ENCODE measurements at regions of chr19 and their contacts with region 1.

Region 1: GRCh38 chr19:662962-663681 is at the start of gene RNF126:
- DNase-seq: peak; percentile 97
- H3K4me3 Mint-ChIP-seq: peak within 1 kb of the TSS; percentile 93
- H3K27ac Mint-ChIP-seq: peak within 1 kb of the TSS; percentile 95
- H3K4me1 Mint-ChIP-seq: peaks cover 40% of the 10 kb centered on the region
- H3K27me3 Mint-ChIP-seq: no peaks in the 10 kb centered on the region
- total RNA-seq, gene RNF126: 84.4 to 89.7 TPM

Region 2: DNA sequence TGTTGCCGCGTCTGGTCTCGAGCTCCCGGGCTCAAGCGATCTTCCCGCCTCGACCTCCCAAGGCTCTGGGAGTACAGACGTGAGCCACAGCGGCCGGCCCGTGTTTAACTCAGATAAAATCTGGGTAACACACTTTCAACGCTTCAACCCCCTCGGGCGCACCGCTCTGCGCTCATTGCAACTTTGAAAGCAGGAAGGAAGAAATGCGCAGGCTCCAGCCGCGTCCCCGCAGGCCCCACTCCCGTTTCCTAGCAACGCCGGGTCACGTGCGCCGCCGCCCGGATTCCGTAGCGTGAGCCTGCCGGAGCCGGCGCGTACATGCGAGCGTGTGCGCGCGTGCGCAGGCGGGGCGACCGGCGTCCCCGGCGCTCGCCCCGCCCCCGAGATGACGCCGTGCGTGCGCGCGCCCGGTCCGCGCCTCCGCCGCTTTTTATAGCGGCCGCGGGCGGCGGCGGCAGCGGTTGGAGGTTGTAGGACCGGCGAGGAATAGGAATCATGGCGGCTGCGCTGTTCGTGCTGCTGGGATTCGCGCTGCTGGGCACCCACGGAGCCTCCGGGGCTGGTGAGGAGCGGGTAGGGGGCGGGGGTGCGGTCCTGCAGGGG is 90.9 kb before region 1 on chr19 and contains the start of gene BSG:
- CTCF ChIA-PET with region 1: no interaction called
- POLR2A ChIA-PET with region 1: no interaction called
- intact Hi-C with region 1: loop called (anchors 2 kb)
- DNase-seq: peak; percentile 99
- H3K4me3 Mint-ChIP-seq: peak within 1 kb of the TSS; percentile 92
- H3K27ac Mint-ChIP-seq: peak within 1 kb of the TSS; percentile 93
- H3K4me1 Mint-ChIP-seq: peaks cover 35% of the 10 kb centered on the region
- H3K27me3 Mint-ChIP-seq: no peaks in the 10 kb centered on the region
- total RNA-seq, gene BSG: 185 to 205 TPM

Region 3: DNA sequence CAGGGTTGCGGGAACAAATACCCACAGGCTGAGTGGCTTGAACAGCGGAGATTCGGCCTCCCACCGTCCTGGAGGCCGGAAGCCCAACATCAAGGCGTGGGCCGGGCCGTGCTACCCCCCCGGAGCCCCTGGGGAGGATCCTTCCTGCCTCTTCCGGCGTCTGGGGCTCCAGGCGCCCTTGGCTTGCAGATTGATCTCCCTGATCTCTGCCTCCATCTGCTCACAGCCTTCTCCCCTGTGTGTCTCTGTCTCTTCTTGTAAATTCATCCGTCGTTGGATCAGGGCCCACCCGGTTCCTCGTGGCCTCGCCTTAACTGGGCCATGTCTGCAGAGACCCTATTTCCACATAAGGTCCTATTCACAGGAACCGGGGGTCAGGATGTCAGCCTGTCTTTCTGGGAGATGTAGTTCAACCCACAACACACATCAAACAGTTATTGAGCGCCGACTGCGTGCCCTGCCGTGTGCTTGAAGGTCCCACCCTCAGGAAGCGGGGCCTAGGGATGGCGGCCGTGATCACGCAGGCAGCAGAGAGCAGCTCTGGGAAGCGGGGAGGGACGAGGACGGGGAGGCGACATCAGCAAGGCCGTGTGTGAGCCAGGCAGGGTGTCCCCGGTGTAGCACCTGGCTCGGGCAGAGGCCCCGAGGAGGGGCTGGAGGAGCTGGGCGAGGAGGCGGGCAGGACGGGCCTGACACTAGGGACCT is 52.2 kb before region 1 on chr19:
- CTCF ChIA-PET with region 1: no interaction called
- POLR2A ChIA-PET with region 1: interaction called, 4 read pairs
- intact Hi-C with region 1: loop called (anchors 2 kb)
- DNase-seq: peak; percentile 78
- H3K4me3 Mint-ChIP-seq: peak overlapping the region; percentile 79
- H3K27ac Mint-ChIP-seq: peak overlapping the region; percentile 95
- H3K4me1 Mint-ChIP-seq: peaks cover 26% of the 10 kb centered on the region
- H3K27me3 Mint-ChIP-seq: no peaks in the 10 kb centered on the region

Region 4: DNA sequence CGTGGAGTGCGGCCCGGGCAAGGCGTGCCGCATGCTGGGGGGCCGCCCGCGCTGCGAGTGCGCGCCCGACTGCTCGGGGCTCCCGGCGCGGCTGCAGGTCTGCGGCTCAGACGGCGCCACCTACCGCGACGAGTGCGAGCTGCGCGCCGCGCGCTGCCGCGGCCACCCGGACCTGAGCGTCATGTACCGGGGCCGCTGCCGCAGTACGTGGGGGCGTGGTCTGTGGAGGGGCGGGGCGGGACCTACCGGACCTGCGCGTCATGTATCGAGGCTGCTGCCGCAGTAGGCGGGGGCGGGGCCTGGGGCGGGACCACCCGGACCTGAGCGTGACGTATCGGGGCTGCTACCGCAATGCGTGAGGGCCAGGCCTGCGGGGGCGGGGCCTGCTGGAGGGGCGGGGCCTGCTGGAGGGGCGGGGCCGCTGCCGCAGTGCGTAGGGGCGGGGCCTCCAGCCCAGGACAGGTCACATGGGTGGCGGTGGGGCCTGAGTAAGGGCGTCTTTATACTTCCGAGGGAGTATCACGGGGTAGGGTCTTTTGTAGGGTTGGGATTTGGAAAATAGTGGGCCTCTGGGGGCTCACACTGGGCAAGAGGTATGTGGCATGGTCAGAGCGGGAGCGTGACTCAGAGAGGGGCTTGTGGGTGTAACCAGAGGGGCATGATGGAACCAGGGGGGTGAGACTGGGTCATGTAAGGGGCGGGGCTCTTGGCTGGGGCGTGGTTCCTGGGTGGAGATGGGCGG is 17.3 kb after region 1 on chr19:
- CTCF ChIA-PET with region 1: interaction called, 7 read pairs
- POLR2A ChIA-PET with region 1: interaction called, 8 read pairs
- intact Hi-C with region 1: loop called (anchors 1 kb)
- DNase-seq: peak; percentile 100
- H3K4me3 Mint-ChIP-seq: peak overlapping the region; percentile 79
- H3K27ac Mint-ChIP-seq: peak overlapping the region; percentile 91
- H3K4me1 Mint-ChIP-seq: no peaks in the 10 kb centered on the region
- H3K27me3 Mint-ChIP-seq: peaks cover 4% of the 10 kb centered on the region

Region 5: DNA sequence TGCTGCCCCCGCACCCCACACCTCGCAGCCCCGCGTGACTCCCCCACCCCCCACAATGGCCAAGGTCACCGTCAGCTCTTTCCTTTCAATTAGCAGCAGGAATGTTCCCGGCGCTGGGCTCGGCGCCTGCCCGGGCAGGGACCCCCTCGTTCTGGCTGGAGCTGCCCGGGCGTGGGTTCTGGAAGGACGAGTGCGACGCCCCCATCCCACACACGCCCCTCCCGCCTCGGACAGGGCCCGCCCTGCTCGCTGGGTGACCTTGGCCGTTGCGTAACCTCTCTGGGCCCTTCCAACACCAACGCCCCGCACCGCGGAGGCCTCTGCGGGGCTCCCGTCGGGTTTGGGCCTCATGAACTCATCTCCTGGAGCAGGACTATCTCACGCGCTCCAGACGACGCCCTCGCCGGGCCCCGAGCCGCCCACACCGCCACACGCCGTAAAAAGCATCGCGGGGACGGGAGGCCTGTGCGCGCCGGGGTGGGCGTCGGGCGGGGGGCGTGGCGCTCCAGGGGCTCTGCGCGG is 55.9 kb after region 1 on chr19:
- CTCF ChIA-PET with region 1: no interaction called
- POLR2A ChIA-PET with region 1: no interaction called
- intact Hi-C with region 1: no loop called
- DNase-seq: no peak
- H3K4me3 Mint-ChIP-seq: no peak overlapping the region
- H3K27ac Mint-ChIP-seq: no peak overlapping the region
- H3K4me1 Mint-ChIP-seq: no peaks in the 10 kb centered on the region
- H3K27me3 Mint-ChIP-seq: peaks cover 27% of the 10 kb centered on the region

Region 6: DNA sequence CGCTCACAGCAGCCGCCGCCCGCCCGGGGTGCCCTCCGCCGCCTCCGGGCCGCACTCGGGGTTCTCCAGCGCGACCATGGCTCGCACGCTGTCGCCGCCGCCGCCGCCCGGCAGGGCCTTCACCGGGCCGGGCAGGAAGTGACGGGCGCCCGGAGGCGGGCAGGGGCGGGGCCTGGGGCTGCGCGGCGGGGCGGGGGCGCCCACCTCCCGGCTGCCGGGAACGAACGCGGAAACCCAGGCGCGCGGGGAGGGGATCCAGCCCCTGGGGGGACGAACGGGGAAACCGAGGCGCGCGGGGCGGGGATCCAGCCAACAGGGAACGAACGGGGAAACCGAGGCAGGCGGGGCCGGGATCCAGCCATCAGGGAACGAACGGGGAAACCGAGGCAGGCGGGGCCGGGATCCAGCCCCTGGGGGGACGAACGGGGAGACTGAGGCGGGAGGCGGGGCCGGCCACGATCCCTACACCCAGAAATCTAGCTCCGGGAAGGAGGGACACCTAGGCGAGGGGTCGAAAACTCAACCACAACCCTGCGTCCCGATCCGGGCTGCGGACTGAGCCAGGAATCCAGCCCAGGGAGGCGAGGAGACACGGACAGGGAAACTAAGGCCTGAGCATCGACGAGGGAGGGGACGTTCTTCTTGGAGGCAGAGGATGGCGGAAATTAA is 250.1 kb after region 1 on chr19 and contains the start of gene R3HDM4:
- CTCF ChIA-PET with region 1: no interaction called
- POLR2A ChIA-PET with region 1: no interaction called
- intact Hi-C with region 1: loop called (anchors 10 kb)
- DNase-seq: peak; percentile 89
- H3K4me3 Mint-ChIP-seq: peak within 1 kb of the TSS; percentile 80
- H3K27ac Mint-ChIP-seq: peak within 1 kb of the TSS; percentile 92
- H3K4me1 Mint-ChIP-seq: peaks cover 31% of the 10 kb centered on the region
- H3K27me3 Mint-ChIP-seq: no peaks in the 10 kb centered on the region
- total RNA-seq, gene R3HDM4: 80.4 to 81.4 TPM